Cardiac septum (tissue), 1 donor: ENCODE measurements at regions of chr3 and their contacts with region 1.

Region 1: GRCh38 chr3:46895204-46895660 is 17.7 kb downstream of the PTH1R start:
- DNase-seq: peak; percentile 83

Region 2: GRCh38 chr3:46496741-46497554 is 398.3 kb before region 1 on chr3:
- intact Hi-C with region 1: loop called (anchors 10 kb)
- DNase-seq: no peak

Region 3: GRCh38 chr3:46705022-46705530 is 190.2 kb before region 1 on chr3:
- intact Hi-C with region 1: loop called (anchors 2 kb)
- DNase-seq: no peak

Region 4: DNA sequence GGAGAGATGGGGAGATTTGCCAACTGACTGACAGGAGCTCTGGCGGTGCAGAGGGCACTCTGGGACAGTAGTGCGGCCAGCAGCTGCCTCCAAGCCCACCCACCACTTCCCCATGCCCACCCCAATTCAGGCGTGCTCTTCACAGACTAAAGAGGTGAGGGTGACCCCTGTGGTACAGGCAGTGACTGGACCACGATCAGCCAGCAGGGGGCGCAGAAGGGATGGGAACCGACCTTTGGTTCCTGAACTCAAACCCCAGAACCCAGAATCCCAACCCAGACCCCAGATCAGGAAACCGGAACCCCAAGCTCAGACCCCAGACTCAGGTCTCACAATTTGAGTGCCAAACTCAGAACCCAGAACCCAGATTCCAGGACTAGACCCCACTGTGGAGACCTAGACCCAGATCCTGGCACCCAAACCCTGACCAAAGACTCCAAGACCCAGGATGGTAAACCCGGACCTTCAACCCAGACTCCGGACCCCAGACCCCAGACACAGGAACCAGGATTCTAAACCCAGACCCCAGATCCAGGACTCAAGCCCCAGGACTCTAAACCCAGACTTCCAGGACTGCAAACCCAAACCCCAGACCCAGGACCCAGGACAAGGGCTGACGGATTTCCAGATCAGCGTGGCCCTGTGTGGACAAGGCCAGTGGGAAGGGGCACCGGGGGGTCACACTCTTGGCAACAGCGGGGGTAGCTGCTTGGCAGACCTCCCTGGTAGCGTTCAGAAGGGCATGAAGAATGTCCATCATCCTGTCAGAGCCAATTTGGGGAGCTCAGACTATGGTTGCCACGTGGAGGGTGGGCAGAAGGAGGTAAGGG is 28.3 kb before region 1 on chr3:
- intact Hi-C with region 1: loop called (anchors 1 kb)
- DNase-seq: peak; percentile 92